Lower leg skin (tissue), 4 donors: ENCODE measurements at regions of chr6 and their contacts with region 1.

Region 1: DNA sequence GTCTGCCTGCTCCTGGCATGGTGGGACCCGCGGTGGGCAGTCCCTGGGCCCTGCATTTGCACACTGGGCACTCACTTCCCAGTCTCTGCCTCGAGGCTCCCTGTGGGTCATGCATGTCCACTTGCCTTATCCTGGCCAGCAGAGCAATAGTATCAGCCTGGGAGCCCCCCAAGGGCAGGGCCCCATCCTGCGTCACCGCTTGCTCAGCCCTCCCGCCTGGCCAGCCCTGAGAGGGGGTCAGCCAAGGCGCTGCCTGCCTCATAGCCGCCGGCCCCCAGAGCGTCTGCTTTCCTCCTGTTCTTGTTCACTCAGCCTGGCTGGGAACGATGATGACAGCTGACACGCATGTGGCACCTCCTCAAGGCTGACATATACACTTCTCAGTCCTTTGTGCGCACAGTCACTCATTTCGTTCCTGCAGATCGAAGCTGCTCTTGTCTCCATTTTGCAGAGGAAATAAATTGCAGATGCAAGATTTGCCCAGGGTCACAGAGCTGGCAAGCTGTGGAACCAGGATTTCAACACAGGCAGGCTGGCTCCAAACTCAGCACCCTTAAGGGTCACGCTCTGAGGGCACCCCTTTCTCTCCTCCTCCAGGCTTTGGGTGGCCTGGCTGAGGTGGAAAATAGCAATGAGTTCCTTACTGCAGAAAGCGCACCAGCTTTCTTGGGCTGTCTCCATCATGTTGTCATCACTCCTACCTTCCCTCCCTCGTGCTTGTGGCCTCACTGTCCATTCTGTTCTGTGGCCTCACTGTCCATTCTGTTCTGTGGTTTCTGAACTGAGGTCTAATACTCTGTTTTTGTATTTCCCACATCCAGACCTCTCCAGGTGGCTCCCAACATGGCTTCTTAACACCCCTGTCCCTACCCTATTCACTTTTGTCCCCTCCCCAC is 17.2 kb downstream of the KCNK17 start:
- DNase-seq: no peak
- H3K4me3 ChIP-seq: no peak overlapping the region
- CTCF ChIP-seq: no peak
- POLR2A ChIP-seq: no peak

Region 2: DNA sequence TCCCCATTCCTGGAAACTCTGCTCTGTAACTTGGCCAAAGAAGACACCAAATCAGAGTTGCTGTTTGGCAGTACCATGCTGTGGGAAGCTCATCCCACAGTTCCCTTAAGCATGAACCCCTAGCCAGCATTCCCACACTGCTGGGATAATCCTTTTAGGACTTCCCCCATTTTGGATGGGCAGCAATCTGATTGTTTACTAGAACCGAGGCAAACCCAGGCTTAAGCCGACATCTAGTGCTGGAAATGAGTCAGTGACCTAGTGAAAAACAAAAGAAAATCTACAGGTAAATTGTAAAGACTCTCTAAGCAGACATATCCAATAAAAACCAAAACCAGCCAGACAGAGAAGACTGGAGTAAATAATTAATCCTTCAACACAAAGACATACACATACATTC is 576.7 kb before region 1 on chr6:
- intact Hi-C with region 1: loop called (anchors 10 kb)
- DNase-seq: no peak
- H3K4me3 ChIP-seq: no peak overlapping the region
- CTCF ChIP-seq: no peak
- POLR2A ChIP-seq: no peak

Region 3: DNA sequence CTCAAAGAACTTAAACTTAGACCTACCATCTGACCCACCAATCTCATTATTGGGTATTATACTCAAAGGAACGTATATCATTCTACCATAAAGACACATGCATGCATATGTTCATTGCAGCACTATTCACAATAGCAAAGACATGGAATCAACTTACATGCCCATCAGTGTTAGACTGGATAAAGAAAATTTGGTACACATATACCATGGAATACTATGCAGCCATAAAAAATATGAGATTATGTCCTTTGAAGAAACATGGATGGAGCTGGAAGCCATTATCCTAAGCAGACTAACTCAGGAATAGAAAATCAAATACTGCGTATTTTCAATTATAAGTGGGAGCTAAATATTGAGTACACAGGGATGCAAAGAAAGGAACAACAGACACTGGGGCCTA is 414.8 kb before region 1 on chr6:
- intact Hi-C with region 1: no loop called
- DNase-seq: no peak
- H3K4me3 ChIP-seq: no peak overlapping the region
- CTCF ChIP-seq: no peak
- POLR2A ChIP-seq: no peak

Region 4: GRCh38 chr6:39137245-39137644 is 159.7 kb before region 1 on chr6:
- intact Hi-C with region 1: no loop called
- DNase-seq: no peak
- H3K4me3 ChIP-seq: no peak overlapping the region
- CTCF ChIP-seq: no peak
- POLR2A ChIP-seq: no peak

Region 5: GRCh38 chr6:39263303-39264037 is 33.5 kb before region 1 on chr6:
- intact Hi-C with region 1: no loop called
- DNase-seq: no peak
- H3K4me3 ChIP-seq: no peak overlapping the region
- CTCF ChIP-seq: no peak
- POLR2A ChIP-seq: no peak

Region 6: GRCh38 chr6:39430871-39431523 is 134.0 kb after region 1 on chr6:
- intact Hi-C with region 1: no loop called
- DNase-seq: peak; percentile 51 to 96
- H3K4me3 ChIP-seq: no peak overlapping the region
- CTCF ChIP-seq: no peak
- POLR2A ChIP-seq: no peak